Adrenal gland (tissue), 19 donors: ENCODE measurements at regions of chr2 and their contacts with region 1.

Region 1: DNA sequence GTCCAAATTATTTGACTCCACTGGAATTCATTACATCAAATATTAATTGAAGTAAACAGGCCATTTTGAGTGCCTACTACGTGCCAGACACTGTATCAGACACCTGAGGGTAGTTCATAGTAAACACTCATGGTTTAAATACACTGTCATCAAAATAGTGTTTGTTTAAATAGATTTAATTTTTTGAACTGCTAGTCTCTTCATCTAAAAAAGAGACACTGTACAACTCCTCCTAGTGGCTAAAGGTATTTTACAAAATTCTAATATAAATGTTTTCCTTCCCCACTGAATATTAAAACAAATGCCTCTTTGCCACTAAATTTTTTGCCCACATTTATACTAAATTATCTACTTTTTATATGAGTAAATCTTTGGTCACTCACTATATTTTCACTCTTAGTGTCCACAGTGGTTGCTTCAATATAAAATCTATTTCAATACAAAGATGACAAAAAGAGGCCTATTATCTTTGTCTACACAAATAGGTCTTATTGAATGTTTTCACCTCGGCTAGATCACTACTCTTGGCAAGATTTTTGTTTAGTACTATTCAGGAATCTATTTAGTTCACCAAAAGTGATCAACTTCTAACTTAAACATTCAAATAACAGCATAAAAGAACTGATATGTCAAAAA is 122.1 kb downstream of the TMEM247 start:
- DNase-seq: no peak
- H3K4me3 ChIP-seq: no peak overlapping the region
- H3K27ac ChIP-seq: no peak overlapping the region
- H3K4me1 ChIP-seq: no peaks in the 10 kb centered on the region
- H3K27me3 ChIP-seq: no peaks in the 10 kb centered on the region
- CTCF ChIP-seq: peak in 5 of 6 experiments; percentile 12 to 62 (median 44)
- POLR2A ChIP-seq: no peak

Region 2: DNA sequence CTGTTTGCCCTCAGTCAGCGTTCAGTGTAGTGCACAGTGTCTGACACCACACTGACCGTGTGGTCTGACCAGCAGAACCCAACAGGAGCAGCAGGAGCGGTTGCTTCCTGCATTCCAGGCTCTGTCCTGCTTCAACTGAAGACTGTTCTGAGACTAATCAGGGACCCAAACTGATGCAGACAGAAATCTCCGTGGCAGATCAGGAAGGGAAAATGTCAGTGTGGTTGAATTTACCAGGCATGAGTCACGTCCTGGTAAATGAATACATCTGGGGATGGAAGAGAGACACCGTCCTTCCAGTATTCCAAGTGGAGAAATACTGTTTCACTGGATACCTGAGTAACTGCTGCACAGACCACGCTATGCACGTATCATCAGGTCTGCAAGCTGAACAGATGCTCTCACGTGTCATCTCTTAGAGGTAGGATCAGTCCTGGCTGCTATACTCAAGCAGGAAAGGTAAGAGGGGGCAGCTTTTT is 527.9 kb before region 1 on chr2:
- intact Hi-C with region 1: no loop called
- DNase-seq: peak in 3 of 7 donors; percentile 11 to 62 (median 35)
- H3K4me3 ChIP-seq: no peak overlapping the region
- H3K27ac ChIP-seq: peak overlapping the region in 2 of 5 donors; percentile 42 to 43
- H3K4me1 ChIP-seq: peaks cover 0 to 6% of the 10 kb centered on the region in 2 donors
- H3K27me3 ChIP-seq: no peaks in the 10 kb centered on the region
- CTCF ChIP-seq: no peak
- POLR2A ChIP-seq: no peak

Region 3: GRCh38 chr2:46555011-46555410 is 46.4 kb before region 1 on chr2:
- intact Hi-C with region 1: loop called in 1 of 2 experiments (anchors 10 kb)
- DNase-seq: no peak
- H3K4me3 ChIP-seq: no peak overlapping the region
- H3K27ac ChIP-seq: peak overlapping the region in 3 of 5 donors; percentile 1 to 70 (median 9)
- H3K4me1 ChIP-seq: peaks cover 0 to 23% of the 10 kb centered on the region in 2 donors
- H3K27me3 ChIP-seq: no peaks in the 10 kb centered on the region
- CTCF ChIP-seq: peak in 3 of 6 experiments; percentile 13 to 25 (median 23)
- POLR2A ChIP-seq: no peak